ENCODE measurements at regions of chr11 and their contacts with region 1.

Region 1: GRCh38 chr11:60985991-60986915 is 14.8 kb downstream of the CD6 start:
- DNase-seq: peak; percentile 81 to 99 (median 90)
- ATAC-seq: peak; percentile 81
- H3K4me3 ChIP-seq: peak overlapping the region; percentile 41
- H3K4me3 Mint-ChIP-seq: peak overlapping the region; percentile 72
- H3K27ac ChIP-seq: peak overlapping the region; percentile 86 to 95
- H3K27ac Mint-ChIP-seq: peak overlapping the region; percentile 94
- H3K4me1 ChIP-seq: peaks cover 91% of the 10 kb centered on the region
- H3K4me1 Mint-ChIP-seq: peaks cover 98% of the 10 kb centered on the region
- H3K27me3 ChIP-seq: no peaks in the 10 kb centered on the region
- H3K27me3 Mint-ChIP-seq: no peaks in the 10 kb centered on the region
- CTCF ChIP-seq: no peak

Region 2: DNA sequence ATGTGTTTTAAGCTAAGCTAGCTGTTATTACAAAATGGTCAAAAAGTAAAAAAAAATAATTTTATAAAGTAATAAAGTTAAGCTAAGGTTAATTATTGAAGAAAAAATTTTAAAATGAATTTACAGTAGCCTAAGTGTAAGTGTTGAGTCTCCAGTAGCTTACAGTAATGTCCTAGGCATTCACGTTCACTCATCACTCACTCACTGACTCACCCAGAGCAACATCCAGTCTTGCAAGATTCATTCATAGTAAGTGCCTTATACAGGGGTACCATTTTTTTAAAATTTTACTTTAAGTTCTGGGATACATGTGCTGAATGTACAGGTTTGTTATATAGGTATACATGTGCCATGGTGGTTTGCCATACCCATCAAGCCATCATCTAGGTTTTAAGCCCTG is 980.9 kb before region 1 on chr11:
- CTCF ChIA-PET with region 1: no interaction called
- POLR2A ChIA-PET with region 1: no interaction called
- intact Hi-C with region 1: no loop called
- DNase-seq: no peak
- ATAC-seq: no peak
- H3K4me3 ChIP-seq: no peak overlapping the region
- H3K4me3 Mint-ChIP-seq: no peak overlapping the region
- H3K27ac ChIP-seq: no peak overlapping the region
- H3K27ac Mint-ChIP-seq: no peak overlapping the region
- H3K4me1 ChIP-seq: no peaks in the 10 kb centered on the region
- H3K4me1 Mint-ChIP-seq: no peaks in the 10 kb centered on the region
- H3K27me3 ChIP-seq: no peaks in the 10 kb centered on the region
- H3K27me3 Mint-ChIP-seq: peaks cover 6% of the 10 kb centered on the region
- CTCF ChIP-seq: no peak

Region 3: GRCh38 chr11:61004180-61004611 is 17.9 kb after region 1 on chr11:
- CTCF ChIA-PET with region 1: no interaction called
- POLR2A ChIA-PET with region 1: interaction called, 47 read pairs
- intact Hi-C with region 1: loop called (anchors 2 kb)
- DNase-seq: peak in 11 of 14 experiments; percentile 40 to 73 (median 55)
- ATAC-seq: peak; percentile 59
- H3K4me3 ChIP-seq: peak overlapping the region; percentile 30
- H3K4me3 Mint-ChIP-seq: peak overlapping the region; percentile 86
- H3K27ac ChIP-seq: peak overlapping the region; percentile 63 to 71
- H3K27ac Mint-ChIP-seq: peak overlapping the region; percentile 95
- H3K4me1 ChIP-seq: peaks cover 89% of the 10 kb centered on the region
- H3K4me1 Mint-ChIP-seq: peaks cover 92% of the 10 kb centered on the region
- H3K27me3 ChIP-seq: no peaks in the 10 kb centered on the region
- H3K27me3 Mint-ChIP-seq: no peaks in the 10 kb centered on the region
- CTCF ChIP-seq: no peak

Region 4: DNA sequence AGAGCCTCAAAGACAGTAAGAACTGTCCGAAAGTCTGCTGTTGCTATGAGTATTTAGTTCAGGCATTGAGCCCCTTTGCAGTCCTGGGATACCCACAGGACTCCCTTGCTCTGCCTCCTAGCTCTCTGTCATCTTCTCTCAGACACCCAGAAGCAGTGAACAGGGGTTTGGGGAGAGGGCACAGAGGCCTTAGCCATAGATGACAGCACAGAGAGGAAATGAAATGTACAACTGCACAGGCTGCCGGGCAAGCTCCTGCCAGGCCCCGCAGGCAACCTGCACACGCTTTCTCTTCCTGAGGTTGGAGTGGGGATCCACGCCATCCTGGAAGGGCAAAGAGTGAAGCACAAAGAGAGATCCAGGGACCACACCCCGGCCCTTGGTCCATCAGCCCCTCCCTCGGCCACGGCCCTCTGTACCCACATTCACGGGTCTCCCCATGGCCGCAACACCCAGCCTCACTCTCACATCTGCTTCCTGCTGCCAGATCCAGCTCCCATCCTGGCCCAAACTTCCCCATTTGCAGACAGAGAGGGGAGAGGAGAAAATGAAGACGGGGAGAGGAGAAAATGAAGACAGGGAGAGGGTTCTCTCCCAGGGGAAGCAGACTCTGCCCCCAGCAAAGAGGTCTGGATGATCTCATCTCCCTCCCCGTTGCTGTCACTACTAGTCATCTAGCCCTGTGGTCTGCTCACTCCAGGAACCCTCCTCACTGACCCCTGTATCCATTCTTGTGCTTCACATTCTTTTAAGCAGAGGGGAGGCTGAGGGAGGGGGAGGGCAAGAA is 25.9 kb after region 1 on chr11:
- CTCF ChIA-PET with region 1: no interaction called
- POLR2A ChIA-PET with region 1: interaction called, 14 read pairs
- intact Hi-C with region 1: no loop called
- DNase-seq: no peak
- ATAC-seq: no peak
- H3K4me3 ChIP-seq: no peak overlapping the region
- H3K4me3 Mint-ChIP-seq: no peak overlapping the region
- H3K27ac ChIP-seq: peak overlapping the region; percentile 3 to 37
- H3K27ac Mint-ChIP-seq: peak overlapping the region; percentile 92
- H3K4me1 ChIP-seq: peaks cover 55% of the 10 kb centered on the region
- H3K4me1 Mint-ChIP-seq: peaks cover 72% of the 10 kb centered on the region
- H3K27me3 ChIP-seq: no peaks in the 10 kb centered on the region
- H3K27me3 Mint-ChIP-seq: no peaks in the 10 kb centered on the region
- CTCF ChIP-seq: no peak

Region 5: GRCh38 chr11:61021661-61022212 is 35.5 kb after region 1 on chr11:
- CTCF ChIA-PET with region 1: interaction called, 4 read pairs
- POLR2A ChIA-PET with region 1: interaction called, 50 read pairs
- intact Hi-C with region 1: loop called (anchors 1 to 5 kb)
- DNase-seq: peak; percentile 82 to 97 (median 92)
- ATAC-seq: peak; percentile 71
- H3K4me3 ChIP-seq: peak overlapping the region; percentile 21
- H3K4me3 Mint-ChIP-seq: peak overlapping the region; percentile 87
- H3K27ac ChIP-seq: peak overlapping the region; percentile 81 to 88
- H3K27ac Mint-ChIP-seq: peak overlapping the region; percentile 99
- H3K4me1 ChIP-seq: peaks cover 85% of the 10 kb centered on the region
- H3K4me1 Mint-ChIP-seq: peaks cover 85% of the 10 kb centered on the region
- H3K27me3 ChIP-seq: no peaks in the 10 kb centered on the region
- H3K27me3 Mint-ChIP-seq: no peaks in the 10 kb centered on the region
- CTCF ChIP-seq: no peak

Region 6: GRCh38 chr11:61061081-61061826 is 75.0 kb after region 1 on chr11:
- CTCF ChIA-PET with region 1: no interaction called
- POLR2A ChIA-PET with region 1: interaction called, 8 read pairs
- intact Hi-C with region 1: loop called in 1 of 2 experiments (anchors 5 kb)
- DNase-seq: peak; percentile 43 to 92 (median 72)
- ATAC-seq: peak; percentile 78
- H3K4me3 ChIP-seq: peak overlapping the region; percentile 36
- H3K4me3 Mint-ChIP-seq: peak overlapping the region; percentile 82
- H3K27ac ChIP-seq: peak overlapping the region; percentile 74 to 85
- H3K27ac Mint-ChIP-seq: peak overlapping the region; percentile 92
- H3K4me1 ChIP-seq: peaks cover 82% of the 10 kb centered on the region
- H3K4me1 Mint-ChIP-seq: peaks cover 76% of the 10 kb centered on the region
- H3K27me3 ChIP-seq: no peaks in the 10 kb centered on the region
- H3K27me3 Mint-ChIP-seq: no peaks in the 10 kb centered on the region
- CTCF ChIP-seq: no peak

Region 7: GRCh38 chr11:61102667-61103571 is 116.7 kb after region 1 on chr11:
- CTCF ChIA-PET with region 1: no interaction called
- POLR2A ChIA-PET with region 1: interaction called, 20 read pairs
- intact Hi-C with region 1: no loop called
- DNase-seq: peak in 4 of 14 experiments; percentile 47 to 78 (median 55)
- ATAC-seq: peak; percentile 22
- H3K4me3 ChIP-seq: peak overlapping the region; percentile 100
- H3K4me3 Mint-ChIP-seq: no peak overlapping the region
- H3K27ac ChIP-seq: peak overlapping the region; percentile 95 to 96
- H3K27ac Mint-ChIP-seq: no peak overlapping the region
- H3K4me1 ChIP-seq: peaks cover 58% of the 10 kb centered on the region
- H3K4me1 Mint-ChIP-seq: peaks cover 45% of the 10 kb centered on the region
- H3K27me3 ChIP-seq: no peaks in the 10 kb centered on the region
- H3K27me3 Mint-ChIP-seq: no peaks in the 10 kb centered on the region
- CTCF ChIP-seq: no peak

Region 8: DNA sequence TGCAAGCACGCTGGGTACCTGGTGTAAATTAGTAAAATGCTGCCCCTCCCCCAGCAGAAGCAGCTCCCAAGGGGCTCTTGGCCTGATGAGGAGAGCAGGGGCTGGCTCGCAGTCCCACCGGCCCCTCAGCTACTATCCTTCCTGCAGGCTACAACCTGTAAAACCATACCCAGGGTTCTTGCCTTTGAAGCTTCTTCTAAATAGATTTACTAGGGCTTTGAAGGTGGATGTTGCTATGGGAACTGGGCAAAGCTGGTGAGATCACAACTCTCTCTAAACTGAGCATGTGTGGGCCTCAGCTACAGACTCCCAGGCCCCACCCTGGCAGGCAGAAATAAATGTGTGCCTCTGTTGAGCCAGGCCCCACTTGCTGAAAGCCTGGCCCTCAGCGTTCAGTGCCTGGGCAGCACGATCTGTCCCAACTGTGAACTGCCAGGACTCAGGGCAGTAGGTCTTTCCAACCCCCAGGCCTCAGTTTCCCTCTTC is 134.5 kb after region 1 on chr11:
- CTCF ChIA-PET with region 1: no interaction called
- POLR2A ChIA-PET with region 1: interaction called, 12 read pairs
- intact Hi-C with region 1: no loop called
- DNase-seq: peak; percentile 43 to 92 (median 52)
- ATAC-seq: peak; percentile 86
- H3K4me3 ChIP-seq: no peak overlapping the region
- H3K4me3 Mint-ChIP-seq: peak overlapping the region; percentile 87
- H3K27ac ChIP-seq: peak overlapping the region; percentile 64 to 74
- H3K27ac Mint-ChIP-seq: peak overlapping the region; percentile 95
- H3K4me1 ChIP-seq: peaks cover 67% of the 10 kb centered on the region
- H3K4me1 Mint-ChIP-seq: peaks cover 72% of the 10 kb centered on the region
- H3K27me3 ChIP-seq: no peaks in the 10 kb centered on the region
- H3K27me3 Mint-ChIP-seq: no peaks in the 10 kb centered on the region
- CTCF ChIP-seq: no peak

Region 9: GRCh38 chr11:62419314-62419929 is 1433.2 kb after region 1 on chr11:
- CTCF ChIA-PET with region 1: no interaction called
- POLR2A ChIA-PET with region 1: no interaction called
- intact Hi-C with region 1: no loop called
- DNase-seq: no peak
- ATAC-seq: no peak
- H3K4me3 ChIP-seq: no peak overlapping the region
- H3K4me3 Mint-ChIP-seq: no peak overlapping the region
- H3K27ac ChIP-seq: no peak overlapping the region
- H3K27ac Mint-ChIP-seq: no peak overlapping the region
- H3K4me1 ChIP-seq: peaks cover under 1% of the 10 kb centered on the region
- H3K4me1 Mint-ChIP-seq: peaks cover 2% of the 10 kb centered on the region
- H3K27me3 ChIP-seq: no peaks in the 10 kb centered on the region
- H3K27me3 Mint-ChIP-seq: no peaks in the 10 kb centered on the region
- CTCF ChIP-seq: no peak

Measured in CD4-positive, alpha-beta T cell (primary cell).